ENCODE measurements at regions of chr6 and their contacts with region 1.

Region 1: DNA sequence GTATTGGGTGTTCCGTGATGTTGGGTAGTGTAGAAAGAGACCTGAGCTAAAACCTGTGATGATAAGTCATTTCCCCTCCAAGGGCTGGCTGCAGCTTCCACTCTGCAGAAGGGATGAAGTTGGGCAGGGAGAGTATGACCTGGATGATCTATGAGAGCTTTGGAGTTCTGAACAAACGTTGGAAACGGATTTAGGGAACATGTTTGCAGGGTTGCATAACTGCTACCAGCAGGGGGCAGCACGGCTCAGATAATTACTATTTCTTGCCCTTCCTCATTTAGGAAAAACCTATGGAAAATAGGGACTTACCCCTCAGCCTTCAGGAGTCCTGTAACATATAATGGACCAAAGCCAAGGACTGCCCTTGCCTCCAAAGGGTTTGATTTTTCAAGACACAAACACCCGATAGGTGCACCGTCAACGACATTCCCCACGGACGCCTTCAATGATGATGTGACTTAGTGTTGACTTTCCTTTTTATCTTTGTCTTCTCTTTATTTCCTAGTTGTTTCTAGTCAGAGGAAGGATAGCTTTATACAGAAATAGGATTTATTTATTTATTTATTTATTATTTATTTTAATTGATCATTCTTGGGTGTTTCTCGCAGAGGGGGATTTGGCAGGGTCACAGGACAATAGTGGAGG is 164.9 kb upstream of the SASH1 start:
- DNase-seq: peak; percentile 50 to 89
- H3K4me3 ChIP-seq: no peak overlapping the region
- H3K27ac ChIP-seq: no peak overlapping the region
- H3K4me1 ChIP-seq: peaks cover 0 to 5% (median 2%) of the 10 kb centered on the region in 4 experiments; a peak in 3 of 7 replicates
- H3K27me3 ChIP-seq: no peaks in the 10 kb centered on the region
- CTCF ChIP-seq: peak; percentile 39 to 87 (median 71)
- EP300 ChIP-seq: no peak
- POLR2A ChIP-seq: no peak
- RAD21 ChIP-seq: peak; percentile 80 to 81

Region 2: DNA sequence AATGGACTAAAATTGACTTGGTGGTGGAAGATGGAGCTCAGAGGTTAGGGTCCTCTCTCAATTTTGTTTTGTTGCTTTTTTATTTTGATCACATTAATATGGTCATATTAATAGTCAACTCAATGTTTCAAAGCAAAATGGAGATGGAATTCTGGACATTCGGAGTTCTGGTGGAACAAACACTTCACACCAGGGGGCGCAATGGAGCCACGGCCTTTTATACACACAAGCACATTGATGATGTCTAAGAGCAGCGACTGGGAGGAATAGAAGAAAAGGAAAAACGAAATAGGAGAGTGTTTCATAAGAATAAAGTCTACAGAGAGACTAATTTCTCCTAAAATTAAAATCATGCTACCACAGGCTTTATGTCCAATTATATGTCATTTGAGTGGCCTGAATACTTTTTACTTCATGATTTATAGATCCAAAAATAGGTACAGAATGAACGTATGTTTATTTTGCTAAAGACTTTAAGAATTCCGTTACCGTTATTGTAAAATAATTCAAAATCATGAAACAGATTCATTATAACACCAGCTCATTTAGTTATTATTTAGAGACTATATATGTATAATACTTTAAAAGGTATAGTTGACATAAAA is 32.7 kb before region 1 on chr6:
- CTCF ChIA-PET with region 1: interaction called, 10 read pairs
- POLR2A ChIA-PET with region 1: no interaction called
- DNase-seq: peak; percentile 31 to 83
- H3K4me3 ChIP-seq: no peak overlapping the region
- H3K27ac ChIP-seq: no peak overlapping the region
- H3K4me1 ChIP-seq: peaks cover 0 to 3% (median 0%) of the 10 kb centered on the region in 4 experiments; a peak in 1 of 7 replicates
- H3K27me3 ChIP-seq: no peaks in the 10 kb centered on the region
- CTCF ChIP-seq: peak; percentile 55 to 78 (median 73)
- EP300 ChIP-seq: no peak
- POLR2A ChIP-seq: no peak
- RAD21 ChIP-seq: peak; percentile 62 to 77

Region 3: DNA sequence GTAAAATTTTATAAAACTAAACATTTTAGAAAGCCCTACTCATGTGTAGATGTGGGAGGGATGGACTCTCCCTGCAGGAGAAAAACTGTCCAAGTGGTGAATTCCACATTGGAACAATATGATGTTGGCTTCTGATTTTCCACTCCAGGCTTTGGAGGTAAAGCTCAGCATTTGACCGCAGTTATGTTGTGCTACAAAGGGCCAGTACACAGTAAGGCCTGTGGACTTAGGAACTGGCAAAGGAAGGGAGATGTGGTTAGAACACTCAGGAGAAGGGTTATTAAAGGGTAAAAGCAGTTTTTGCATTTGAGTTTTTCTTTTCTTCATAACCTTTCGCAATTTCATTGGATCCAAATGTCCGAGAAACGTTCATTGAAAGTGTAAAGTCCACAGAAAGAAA is 14.6 kb after region 1 on chr6:
- CTCF ChIA-PET with region 1: interaction called, 16 read pairs
- POLR2A ChIA-PET with region 1: interaction called, 3 read pairs
- DNase-seq: no peak
- H3K4me3 ChIP-seq: no peak overlapping the region
- H3K27ac ChIP-seq: no peak overlapping the region
- H3K4me1 ChIP-seq: no peaks in the 10 kb centered on the region
- H3K27me3 ChIP-seq: no peaks in the 10 kb centered on the region
- CTCF ChIP-seq: no peak
- EP300 ChIP-seq: no peak
- POLR2A ChIP-seq: no peak
- RAD21 ChIP-seq: no peak

Region 4: DNA sequence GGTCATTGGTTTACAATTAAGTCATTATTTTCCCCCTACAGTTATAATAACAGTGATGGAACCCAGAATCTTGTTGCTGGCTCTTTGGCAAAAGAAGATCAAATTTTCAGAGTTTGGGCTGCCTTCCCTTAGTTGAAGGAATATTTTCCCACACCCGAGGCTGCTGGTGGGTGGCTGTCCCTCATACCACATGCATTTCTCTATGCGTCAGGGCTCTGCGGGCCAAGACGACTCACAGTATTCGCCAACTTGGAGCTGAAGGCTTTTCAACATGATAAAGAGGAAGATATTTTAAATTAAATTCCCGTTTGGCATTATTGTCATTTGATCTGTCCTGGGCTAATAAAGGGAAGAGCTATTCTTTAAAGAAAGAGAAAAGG is 62.7 kb after region 1 on chr6:
- CTCF ChIA-PET with region 1: interaction called, 15 read pairs
- POLR2A ChIA-PET with region 1: no interaction called
- DNase-seq: no peak
- H3K4me3 ChIP-seq: no peak overlapping the region
- H3K27ac ChIP-seq: no peak overlapping the region
- H3K4me1 ChIP-seq: no peaks in the 10 kb centered on the region
- H3K27me3 ChIP-seq: no peaks in the 10 kb centered on the region
- CTCF ChIP-seq: no peak
- EP300 ChIP-seq: no peak
- POLR2A ChIP-seq: no peak
- RAD21 ChIP-seq: no peak

Region 5: GRCh38 chr6:148271711-148272439 is 94.2 kb after region 1 on chr6:
- CTCF ChIA-PET with region 1: interaction called, 11 read pairs
- POLR2A ChIA-PET with region 1: no interaction called
- DNase-seq: no peak
- H3K4me3 ChIP-seq: no peak overlapping the region
- H3K27ac ChIP-seq: no peak overlapping the region; the same call in 1 of the 2 replicates
- H3K4me1 ChIP-seq: peaks cover 0 to 2% (median 0%) of the 10 kb centered on the region in 4 experiments; a peak in 1 of 7 replicates
- H3K27me3 ChIP-seq: no peaks in the 10 kb centered on the region
- CTCF ChIP-seq: no peak
- EP300 ChIP-seq: no peak
- POLR2A ChIP-seq: no peak
- RAD21 ChIP-seq: no peak

Region 6: GRCh38 chr6:148464319-148465010 is 286.8 kb after region 1 on chr6:
- CTCF ChIA-PET with region 1: interaction called, 25 read pairs
- POLR2A ChIA-PET with region 1: no interaction called
- DNase-seq: peak; percentile 46 to 85
- H3K4me3 ChIP-seq: no peak overlapping the region
- H3K27ac ChIP-seq: no peak overlapping the region
- H3K4me1 ChIP-seq: peaks cover 0 to 4% (median 0%) of the 10 kb centered on the region in 4 experiments; a peak in 3 of 7 replicates
- H3K27me3 ChIP-seq: peaks cover 0 to 1% (median 0%) of the 10 kb centered on the region in 4 experiments; a peak in 1 of 7 replicates
- CTCF ChIP-seq: peak; percentile 52 to 94 (median 86)
- EP300 ChIP-seq: no peak
- POLR2A ChIP-seq: no peak
- RAD21 ChIP-seq: peak; percentile 91 to 93